ENCODE measurements at regions of chr2 and their contacts with region 1.

Region 1: GRCh38 chr2:100509066-100509465 is 38.8 kb downstream of the NMS start:
- DNase-seq: no peak
- H3K4me3 Mint-ChIP-seq: no peak overlapping the region
- H3K27ac Mint-ChIP-seq: no peak overlapping the region
- H3K4me1 Mint-ChIP-seq: peaks cover 2% of the 10 kb centered on the region
- H3K27me3 Mint-ChIP-seq: no peaks in the 10 kb centered on the region

Region 2: GRCh38 chr2:100470898-100471514 is 38.1 kb before region 1 on chr2:
- CTCF ChIA-PET with region 1: no interaction called
- intact Hi-C with region 1: loop called (anchors 1 kb)
- DNase-seq: peak; percentile 33
- H3K4me3 Mint-ChIP-seq: no peak overlapping the region
- H3K27ac Mint-ChIP-seq: no peak overlapping the region
- H3K4me1 Mint-ChIP-seq: no peaks in the 10 kb centered on the region
- H3K27me3 Mint-ChIP-seq: peaks cover 21% of the 10 kb centered on the region

Measured in activated naive CD4-positive, alpha-beta T cell treated with anti-CD3 and anti-CD28 coated beads for 36 hours (primary cell).